Activated CD4-positive, alpha-beta memory T cell treated with anti-CD3 and anti-CD28 coated beads, Interleukin-2, amount 10 ng/mL, durations not matched to agents 7 days and 5 days (primary cell): ENCODE measurements at regions of chr1 and their contacts with region 1.

Region 1: DNA sequence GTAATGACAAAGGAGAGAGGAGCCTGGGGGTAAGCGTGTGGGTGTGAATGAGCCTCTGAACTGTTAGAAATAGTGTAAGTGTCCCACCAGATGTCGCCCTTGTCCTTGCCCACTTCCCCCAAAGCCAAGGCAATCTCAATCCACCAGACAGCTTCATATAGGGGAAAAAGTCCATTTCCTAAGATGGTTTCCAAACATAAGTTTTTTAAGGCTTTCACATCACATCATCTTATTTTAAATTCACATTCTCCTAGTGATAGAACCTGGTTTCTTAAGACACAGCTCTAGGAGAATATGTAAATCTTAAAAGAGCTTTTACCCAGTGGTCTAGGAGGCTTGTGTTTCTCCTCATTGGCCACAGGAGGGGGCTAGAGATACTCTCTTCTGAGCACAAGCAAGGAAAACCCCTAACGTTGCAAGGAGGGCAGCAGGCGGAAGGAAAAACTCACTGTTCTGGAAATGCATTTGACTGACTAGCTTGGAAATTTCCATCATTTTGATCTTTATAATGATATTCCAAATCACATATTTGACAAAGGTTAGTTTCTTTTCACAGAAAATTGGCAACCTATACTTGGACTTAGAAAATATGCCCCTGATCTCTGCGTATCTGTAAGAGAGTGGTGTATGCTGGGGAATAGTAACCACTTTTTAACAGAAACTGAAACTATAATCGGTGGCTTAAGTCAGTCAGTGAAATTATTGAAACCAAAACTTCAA is 51.9 kb upstream of the LPAR3 start:
- DNase-seq: peak; percentile 74
- H3K4me3 Mint-ChIP-seq: peak overlapping the region; percentile 73
- H3K27ac Mint-ChIP-seq: peak overlapping the region; percentile 73
- H3K4me1 Mint-ChIP-seq: peaks cover 15% of the 10 kb centered on the region
- H3K27me3 Mint-ChIP-seq: no peaks in the 10 kb centered on the region

Region 2: GRCh38 chr1:84919461-84919970 is 25.4 kb before region 1 on chr1:
- CTCF ChIA-PET with region 1: no interaction called
- POLR2A ChIA-PET with region 1: no interaction called
- DNase-seq: no peak
- H3K4me3 Mint-ChIP-seq: no peak overlapping the region
- H3K27ac Mint-ChIP-seq: no peak overlapping the region
- H3K4me1 Mint-ChIP-seq: no peaks in the 10 kb centered on the region
- H3K27me3 Mint-ChIP-seq: peaks cover 2% of the 10 kb centered on the region

Region 3: DNA sequence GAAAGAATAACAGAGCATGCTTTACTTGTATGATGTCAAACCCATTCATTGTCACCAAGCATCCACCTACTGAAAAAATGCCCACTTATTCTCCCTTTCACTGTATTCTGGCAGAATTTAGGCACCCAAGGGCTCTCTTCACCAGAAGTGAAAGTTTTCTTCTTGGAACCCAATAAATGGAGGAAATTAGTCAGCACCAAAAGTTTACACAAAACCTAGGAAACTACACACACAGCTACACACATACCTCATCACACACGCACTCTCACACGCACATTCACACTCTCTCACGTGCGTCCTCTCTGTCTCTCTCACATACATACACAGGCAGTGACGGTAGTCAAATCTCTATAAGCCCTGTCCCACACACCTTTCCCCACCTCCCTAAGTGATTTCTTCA is 14.4 kb after region 1 on chr1:
- CTCF ChIA-PET with region 1: interaction called, 25 read pairs
- POLR2A ChIA-PET with region 1: interaction called, 7 read pairs
- DNase-seq: peak; percentile 59
- H3K4me3 Mint-ChIP-seq: no peak overlapping the region
- H3K27ac Mint-ChIP-seq: no peak overlapping the region
- H3K4me1 Mint-ChIP-seq: peaks cover 23% of the 10 kb centered on the region
- H3K27me3 Mint-ChIP-seq: peaks cover 5% of the 10 kb centered on the region

Region 4: GRCh38 chr1:84996846-84997666 is 52.1 kb after region 1 on chr1 and contains the start of gene MCOLN2:
- CTCF ChIA-PET with region 1: interaction called, 22 read pairs
- POLR2A ChIA-PET with region 1: interaction called, 15 read pairs
- DNase-seq: peak; percentile 66
- H3K4me3 Mint-ChIP-seq: peak within 1 kb of the TSS; percentile 79
- H3K27ac Mint-ChIP-seq: peak within 1 kb of the TSS; percentile 76
- H3K4me1 Mint-ChIP-seq: peaks cover 50% of the 10 kb centered on the region
- H3K27me3 Mint-ChIP-seq: peaks cover 25% of the 10 kb centered on the region
- total RNA-seq, gene MCOLN2: 27.2 to 28.2 TPM

Region 5: GRCh38 chr1:85109475-85109874 is 164.5 kb after region 1 on chr1:
- CTCF ChIA-PET with region 1: interaction called, 12 read pairs
- POLR2A ChIA-PET with region 1: interaction called, 3 read pairs
- DNase-seq: peak; percentile 31
- H3K4me3 Mint-ChIP-seq: no peak overlapping the region
- H3K27ac Mint-ChIP-seq: no peak overlapping the region
- H3K4me1 Mint-ChIP-seq: no peaks in the 10 kb centered on the region
- H3K27me3 Mint-ChIP-seq: peaks cover 11% of the 10 kb centered on the region

Region 6: GRCh38 chr1:85276215-85276977 is 331.5 kb after region 1 on chr1 and contains the start of gene BCL10:
- CTCF ChIA-PET with region 1: interaction called, 14 read pairs
- POLR2A ChIA-PET with region 1: interaction called, 16 read pairs
- DNase-seq: peak; percentile 99
- H3K4me3 Mint-ChIP-seq: peak within 1 kb of the TSS; percentile 80
- H3K27ac Mint-ChIP-seq: peak within 1 kb of the TSS; percentile 80
- H3K4me1 Mint-ChIP-seq: peaks cover 53% of the 10 kb centered on the region
- H3K27me3 Mint-ChIP-seq: peaks cover 26% of the 10 kb centered on the region
- total RNA-seq, gene BCL10: 24.3 to 30.1 TPM